ENCODE measurements at regions of chr16 and their contacts with region 1.

Region 1: DNA sequence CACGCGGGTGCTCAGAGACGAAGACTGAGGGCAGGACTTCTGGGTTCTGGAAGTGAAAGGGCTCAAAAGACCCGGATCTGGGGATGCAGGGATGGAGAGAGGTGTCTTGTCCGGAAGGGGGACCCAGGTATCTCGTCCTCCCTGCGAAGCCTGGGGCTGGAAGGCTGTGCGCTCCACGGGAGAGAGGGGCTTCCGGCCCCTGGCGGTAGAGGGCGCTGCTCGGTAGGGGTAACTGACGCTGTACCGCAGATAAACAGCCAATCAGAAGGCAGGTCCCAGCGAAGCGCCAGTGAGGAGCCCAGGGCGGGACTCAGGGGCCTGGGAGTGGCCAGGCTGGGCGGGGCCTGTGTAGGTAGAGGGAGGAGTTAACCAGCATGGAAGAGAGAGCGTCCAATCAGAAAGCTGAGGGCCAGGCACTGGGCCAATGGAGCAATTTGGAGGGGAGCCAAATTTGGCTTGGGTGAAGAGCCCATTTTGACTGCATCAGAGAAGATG is 804 bp downstream of the TGFB1I1 start:
- DNase-seq: peak; percentile 60
- ATAC-seq: peak; percentile 74
- H3K4me3 ChIP-seq: peak overlapping the region; percentile 63 to 79
- H3K27ac ChIP-seq: peak overlapping the region; percentile 81
- H3K4me1 ChIP-seq: peaks cover 6% of the 10 kb centered on the region; the same call in 1 of the 2 replicates
- H3K27me3 ChIP-seq: no peaks in the 10 kb centered on the region
- CTCF ChIP-seq: peak; percentile 86

Region 2: GRCh38 chr16:31528523-31529397 is 56.0 kb after region 1 on chr16:
- CTCF ChIA-PET with region 1: no interaction called
- POLR2A ChIA-PET with region 1: no interaction called
- in situ Hi-C with region 1: no loop called
- intact Hi-C with region 1: loop called (anchors 5 kb)
- DNase-seq: no peak
- ATAC-seq: peak; percentile 29; the same call in 1 of the 2 replicates
- H3K4me3 ChIP-seq: peak overlapping the region; percentile 33 to 43
- H3K27ac ChIP-seq: no peak overlapping the region
- H3K4me1 ChIP-seq: 0 out of 2 replicates have a peak, but pooled peaks cover 4% of the 10 kb centered on the region
- H3K27me3 ChIP-seq: peaks cover 6% of the 10 kb centered on the region; the same call in 1 of the 2 replicates
- CTCF ChIP-seq: no peak

Measured in Panc1 (cell line).